Natural killer cell (primary cell): ENCODE measurements at regions of chr17 and their contacts with region 1.

Region 1: GRCh38 chr17:50956750-50957523 is 90.8 kb upstream of the TOB1 start:
- DNase-seq: peak; percentile 53 to 85
- ATAC-seq: peak; percentile 86 to 99 (median 94)
- H3K4me3 ChIP-seq: no peak overlapping the region
- H3K4me3 Mint-ChIP-seq: no peak overlapping the region
- H3K27ac ChIP-seq: no peak overlapping the region
- H3K27ac Mint-ChIP-seq: peak overlapping the region in 1 of 2 donors; percentile 45
- H3K4me1 ChIP-seq: peaks cover 6% of the 10 kb centered on the region
- H3K4me1 Mint-ChIP-seq: peaks cover 0 to 5% of the 10 kb centered on the region in 2 donors
- H3K27me3 ChIP-seq: no peaks in the 10 kb centered on the region
- H3K27me3 Mint-ChIP-seq: peaks cover 2 to 6% of the 10 kb centered on the region in 2 donors
- CTCF ChIP-seq: peak; percentile 75

Region 2: GRCh38 chr17:50783193-50783660 is 173.7 kb before region 1 on chr17:
- intact Hi-C with region 1: loop called (anchors 2 kb)
- DNase-seq: peak; percentile 76 to 86
- ATAC-seq: peak; percentile 88 to 94 (median 89)
- H3K4me3 ChIP-seq: no peak overlapping the region
- H3K4me3 Mint-ChIP-seq: no peak overlapping the region
- H3K27ac ChIP-seq: no peak overlapping the region
- H3K27ac Mint-ChIP-seq: no peak overlapping the region
- H3K4me1 ChIP-seq: peaks cover 32% of the 10 kb centered on the region
- H3K4me1 Mint-ChIP-seq: peaks cover 0 to 13% of the 10 kb centered on the region in 2 donors
- H3K27me3 ChIP-seq: peaks cover 6% of the 10 kb centered on the region
- H3K27me3 Mint-ChIP-seq: peaks cover 0 to 6% of the 10 kb centered on the region in 2 donors
- CTCF ChIP-seq: peak; percentile 90

Region 3: DNA sequence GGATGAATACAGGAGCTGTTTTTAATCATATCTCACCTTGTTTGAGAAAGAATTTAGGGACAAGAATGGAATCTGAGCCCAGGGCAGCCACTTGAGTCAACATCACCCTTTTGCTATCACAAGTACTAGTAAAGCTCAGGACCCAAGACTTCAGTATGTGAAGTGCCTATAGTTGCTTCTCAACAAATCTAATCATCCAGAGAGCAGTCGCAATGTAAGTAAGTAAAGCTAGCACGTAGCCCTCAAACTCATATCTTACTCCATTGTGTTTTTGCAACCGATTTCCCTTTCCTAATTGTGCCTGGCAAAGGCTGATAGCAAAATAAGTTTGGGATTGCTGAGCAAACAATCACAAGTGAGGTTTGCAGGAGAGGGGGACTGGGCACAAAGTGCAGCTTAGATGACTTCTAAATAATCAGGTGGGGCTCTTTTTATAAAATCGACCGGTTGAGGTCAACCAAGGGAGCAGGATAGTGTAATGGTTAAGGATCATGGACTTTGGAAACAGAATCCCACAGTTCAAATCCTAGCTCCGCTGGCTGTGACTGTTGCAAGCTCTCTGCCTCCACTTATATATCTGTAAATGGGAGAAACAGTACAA is 103.8 kb before region 1 on chr17:
- intact Hi-C with region 1: loop called (anchors 1 kb)
- DNase-seq: no peak
- ATAC-seq: no peak
- H3K4me3 ChIP-seq: no peak overlapping the region
- H3K4me3 Mint-ChIP-seq: peak overlapping the region; percentile 84
- H3K27ac ChIP-seq: no peak overlapping the region
- H3K27ac Mint-ChIP-seq: peak overlapping the region; percentile 77 to 87
- H3K4me1 ChIP-seq: peaks cover 11% of the 10 kb centered on the region
- H3K4me1 Mint-ChIP-seq: peaks cover 15 to 16% of the 10 kb centered on the region in 2 donors
- H3K27me3 ChIP-seq: no peaks in the 10 kb centered on the region
- H3K27me3 Mint-ChIP-seq: peaks cover 6 to 20% of the 10 kb centered on the region in 2 donors
- CTCF ChIP-seq: no peak

Region 4: GRCh38 chr17:50883850-50884438 is 73.0 kb before region 1 on chr17:
- intact Hi-C with region 1: no loop called
- DNase-seq: peak in 1 of 2 donors; percentile 3
- ATAC-seq: peak in 1 of 3 donors; percentile 29
- H3K4me3 ChIP-seq: no peak overlapping the region
- H3K4me3 Mint-ChIP-seq: no peak overlapping the region
- H3K27ac ChIP-seq: no peak overlapping the region
- H3K27ac Mint-ChIP-seq: no peak overlapping the region
- H3K4me1 ChIP-seq: peaks cover 20% of the 10 kb centered on the region
- H3K4me1 Mint-ChIP-seq: peaks cover 13 to 29% of the 10 kb centered on the region in 2 donors
- H3K27me3 ChIP-seq: no peaks in the 10 kb centered on the region
- H3K27me3 Mint-ChIP-seq: peaks cover 6 to 11% of the 10 kb centered on the region in 2 donors
- CTCF ChIP-seq: no peak

Region 5: DNA sequence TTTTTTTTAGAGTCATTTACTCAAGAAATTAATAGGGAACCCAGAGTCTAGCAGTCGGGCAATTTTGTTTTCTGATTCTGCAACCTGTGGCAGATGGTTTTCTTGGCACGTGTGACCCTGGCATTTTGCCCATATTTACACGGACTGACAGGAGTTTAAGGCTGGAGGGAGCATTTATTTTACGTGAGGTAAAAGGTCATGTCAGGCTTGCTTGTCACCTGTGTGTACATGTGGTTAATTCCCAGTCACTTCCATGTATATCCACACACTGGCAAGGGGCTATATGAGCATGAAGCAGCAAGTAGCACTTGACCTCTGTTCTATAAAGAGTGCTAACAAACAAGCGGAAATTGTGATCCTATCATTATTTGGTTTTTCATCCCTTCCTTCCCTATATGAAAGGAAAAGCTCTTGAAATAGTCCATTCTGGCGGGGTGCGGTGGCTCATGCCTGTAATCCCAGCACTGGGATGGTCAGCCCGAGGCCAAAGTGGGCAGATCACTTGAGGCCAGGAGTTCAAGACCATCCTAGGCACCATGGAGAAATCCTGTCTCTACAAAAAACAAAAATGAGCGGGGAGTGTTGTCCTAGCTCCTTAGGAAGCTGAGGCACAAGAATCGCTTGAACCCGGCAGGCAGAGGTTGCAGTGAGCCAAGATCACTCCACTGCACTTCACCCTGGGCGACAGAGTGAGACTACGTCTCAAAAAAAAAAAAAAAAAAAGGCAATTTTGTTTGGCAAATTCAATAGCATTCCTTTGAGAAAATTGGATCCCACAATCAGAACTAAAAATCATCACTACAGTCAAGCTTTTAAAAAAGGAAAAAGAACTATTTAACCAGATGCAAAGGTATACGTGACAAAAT is 161.6 kb after region 1 on chr17:
- intact Hi-C with region 1: no loop called
- DNase-seq: peak in 1 of 2 donors; percentile 36
- ATAC-seq: no peak
- H3K4me3 ChIP-seq: no peak overlapping the region
- H3K4me3 Mint-ChIP-seq: peak overlapping the region; percentile 94
- H3K27ac ChIP-seq: no peak overlapping the region
- H3K27ac Mint-ChIP-seq: peak overlapping the region; percentile 96 to 97
- H3K4me1 ChIP-seq: peaks cover 27% of the 10 kb centered on the region
- H3K4me1 Mint-ChIP-seq: peaks cover 42 to 51% of the 10 kb centered on the region in 2 donors
- H3K27me3 ChIP-seq: no peaks in the 10 kb centered on the region
- H3K27me3 Mint-ChIP-seq: no peaks in the 10 kb centered on the region
- CTCF ChIP-seq: no peak